Gastrocnemius medialis (tissue), 4 donors: ENCODE measurements at regions of chr4 and their contacts with region 1.

Region 1: GRCh38 chr4:184263910-184264732 is 46.4 kb upstream of the ENPP6 start:
- DNase-seq: peak; percentile 79 to 86
- ATAC-seq: peak; percentile 85 to 92
- H3K4me3 ChIP-seq: no peak overlapping the region
- H3K27ac ChIP-seq: no peak overlapping the region
- H3K4me1 ChIP-seq: no peaks in the 10 kb centered on the region
- H3K27me3 ChIP-seq: no peaks in the 10 kb centered on the region
- CTCF ChIP-seq: peak; percentile 81 to 94 (median 90)
- POLR2A ChIP-seq: no peak

Region 2: GRCh38 chr4:184544788-184545409 is 280.8 kb after region 1 on chr4:
- in situ Hi-C with region 1: loop called in 1 of 4 experiments (anchors 10 kb)
- intact Hi-C with region 1: no loop called
- DNase-seq: no peak
- ATAC-seq: no peak
- H3K4me3 ChIP-seq: no peak overlapping the region
- H3K27ac ChIP-seq: no peak overlapping the region
- H3K4me1 ChIP-seq: no peaks in the 10 kb centered on the region
- H3K27me3 ChIP-seq: peaks cover 0 to 2% (median 0%) of the 10 kb centered on the region in 3 donors
- CTCF ChIP-seq: no peak
- POLR2A ChIP-seq: no peak